ENCODE measurements at regions of chr2 and their contacts with region 1.

Region 1: GRCh38 chr2:48471048-48471474 is 58.9 kb upstream of the STON1 start:
- DNase-seq: no peak
- ATAC-seq: peak in 1 of 2 donors; percentile 63
- H3K4me3 ChIP-seq: no peak overlapping the region
- H3K27ac ChIP-seq: no peak overlapping the region
- H3K4me1 ChIP-seq: no peaks in the 10 kb centered on the region
- H3K27me3 ChIP-seq: no peaks in the 10 kb centered on the region
- CTCF ChIP-seq: peak in 4 of 5 experiments; percentile 40 to 57 (median 49)
- POLR2A ChIP-seq: no peak

Region 2: DNA sequence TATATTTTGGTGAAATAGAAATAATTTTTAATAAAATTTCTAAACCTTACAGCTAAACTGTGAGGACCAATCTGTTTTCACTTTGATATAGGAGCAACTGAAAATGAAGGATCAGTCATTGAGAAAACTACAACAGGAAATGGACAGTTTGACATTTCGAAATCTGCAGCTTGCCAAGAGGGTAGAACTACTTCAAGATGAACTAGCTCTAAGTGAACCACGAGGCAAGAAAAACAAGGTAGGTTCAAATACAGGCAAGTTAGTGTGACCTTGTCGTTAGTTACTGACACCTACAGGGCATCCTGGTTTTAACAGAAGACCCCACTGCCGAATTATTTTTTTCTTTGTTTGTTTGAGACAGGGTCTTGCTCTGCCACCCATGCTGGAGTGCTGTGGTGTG is 16.6 kb before region 1 on chr2:
- in situ Hi-C with region 1: no loop called
- intact Hi-C with region 1: loop called (anchors 1 kb)
- DNase-seq: no peak
- ATAC-seq: no peak
- H3K4me3 ChIP-seq: no peak overlapping the region
- H3K27ac ChIP-seq: no peak overlapping the region
- H3K4me1 ChIP-seq: peaks cover 1 to 14% of the 10 kb centered on the region in 2 donors
- H3K27me3 ChIP-seq: no peaks in the 10 kb centered on the region
- CTCF ChIP-seq: no peak
- POLR2A ChIP-seq: no peak

Region 3: GRCh38 chr2:48589170-48589767 is 118.2 kb after region 1 on chr2:
- in situ Hi-C with region 1: loop called in 1 of 4 experiments (anchors 10 kb)
- intact Hi-C with region 1: no loop called
- DNase-seq: no peak
- ATAC-seq: no peak
- H3K4me3 ChIP-seq: no peak overlapping the region
- H3K27ac ChIP-seq: no peak overlapping the region
- H3K4me1 ChIP-seq: no peaks in the 10 kb centered on the region
- H3K27me3 ChIP-seq: no peaks in the 10 kb centered on the region
- CTCF ChIP-seq: peak; percentile 15 to 54 (median 29)
- POLR2A ChIP-seq: no peak

Region 4: GRCh38 chr2:48617618-48618017 is 146.6 kb after region 1 on chr2 and contains the start of gene GTF2A1L:
- in situ Hi-C with region 1: no loop called
- intact Hi-C with region 1: no loop called
- DNase-seq: no peak
- ATAC-seq: no peak
- H3K4me3 ChIP-seq: no peak within 1 kb of the TSS
- H3K27ac ChIP-seq: no peak within 1 kb of the TSS
- H3K4me1 ChIP-seq: no peaks in the 10 kb centered on the region
- H3K27me3 ChIP-seq: no peaks in the 10 kb centered on the region
- CTCF ChIP-seq: no peak
- POLR2A ChIP-seq: no peak
- total RNA-seq, gene GTF2A1L: 0.16 to 1.8 TPM in 2 of 4 donors, not detected in the others

Region 5: DNA sequence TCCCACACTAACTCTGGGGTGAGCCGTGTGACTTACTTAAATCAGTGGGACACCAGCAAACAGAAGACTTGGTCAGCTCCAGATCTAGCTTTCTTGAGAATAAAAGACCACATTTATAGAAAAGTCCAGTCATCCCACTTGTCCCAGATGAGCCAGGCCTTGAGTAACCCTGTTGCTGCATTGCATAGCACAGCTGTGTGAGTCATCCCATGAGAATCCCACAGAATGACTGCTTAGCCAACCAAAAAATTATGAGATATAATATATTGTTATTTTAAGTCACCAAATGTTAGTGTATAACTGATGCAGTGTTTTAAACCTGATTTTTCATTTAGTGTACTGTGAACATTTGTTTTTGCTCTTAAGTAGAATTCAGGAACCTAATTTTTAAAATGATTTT is 777.4 kb after region 1 on chr2:
- in situ Hi-C with region 1: no loop called
- intact Hi-C with region 1: no loop called
- DNase-seq: no peak
- ATAC-seq: no peak
- H3K4me3 ChIP-seq: no peak overlapping the region
- H3K27ac ChIP-seq: no peak overlapping the region
- H3K4me1 ChIP-seq: no peaks in the 10 kb centered on the region
- H3K27me3 ChIP-seq: no peaks in the 10 kb centered on the region
- CTCF ChIP-seq: no peak
- POLR2A ChIP-seq: no peak

Measured in gastrocnemius medialis (tissue), 4 donors.